ENCODE measurements at regions of chr9 and their contacts with region 1.

Region 1: GRCh38 chr9:35611230-35611797 is 6.3 kb downstream of the TESK1 start:
- DNase-seq: peak in 1 of 2 experiments; percentile 55
- H3K4me3 ChIP-seq: no peak overlapping the region
- H3K27ac ChIP-seq: no peak overlapping the region
- H3K4me1 ChIP-seq: peaks cover 0 to 5% (median 3%) of the 10 kb centered on the region in 4 experiments; a peak in 4 of 7 replicates
- H3K27me3 ChIP-seq: peaks cover 0 to 7% (median 5%) of the 10 kb centered on the region in 4 experiments; a peak in 4 of 7 replicates
- CTCF ChIP-seq: peak; percentile 63 to 87 (median 87)
- EP300 ChIP-seq: no peak
- POLR2A ChIP-seq: no peak
- RAD21 ChIP-seq: peak; percentile 41 to 58

Region 2: GRCh38 chr9:35628389-35628991 is 17.2 kb after region 1 on chr9:
- CTCF ChIA-PET with region 1: interaction called, 13 read pairs
- POLR2A ChIA-PET with region 1: interaction called, 3 read pairs
- DNase-seq: no peak
- H3K4me3 ChIP-seq: no peak overlapping the region
- H3K27ac ChIP-seq: no peak overlapping the region
- H3K4me1 ChIP-seq: no peaks in the 10 kb centered on the region
- H3K27me3 ChIP-seq: no peaks in the 10 kb centered on the region
- CTCF ChIP-seq: no peak
- EP300 ChIP-seq: no peak
- POLR2A ChIP-seq: no peak
- RAD21 ChIP-seq: no peak

Region 3: DNA sequence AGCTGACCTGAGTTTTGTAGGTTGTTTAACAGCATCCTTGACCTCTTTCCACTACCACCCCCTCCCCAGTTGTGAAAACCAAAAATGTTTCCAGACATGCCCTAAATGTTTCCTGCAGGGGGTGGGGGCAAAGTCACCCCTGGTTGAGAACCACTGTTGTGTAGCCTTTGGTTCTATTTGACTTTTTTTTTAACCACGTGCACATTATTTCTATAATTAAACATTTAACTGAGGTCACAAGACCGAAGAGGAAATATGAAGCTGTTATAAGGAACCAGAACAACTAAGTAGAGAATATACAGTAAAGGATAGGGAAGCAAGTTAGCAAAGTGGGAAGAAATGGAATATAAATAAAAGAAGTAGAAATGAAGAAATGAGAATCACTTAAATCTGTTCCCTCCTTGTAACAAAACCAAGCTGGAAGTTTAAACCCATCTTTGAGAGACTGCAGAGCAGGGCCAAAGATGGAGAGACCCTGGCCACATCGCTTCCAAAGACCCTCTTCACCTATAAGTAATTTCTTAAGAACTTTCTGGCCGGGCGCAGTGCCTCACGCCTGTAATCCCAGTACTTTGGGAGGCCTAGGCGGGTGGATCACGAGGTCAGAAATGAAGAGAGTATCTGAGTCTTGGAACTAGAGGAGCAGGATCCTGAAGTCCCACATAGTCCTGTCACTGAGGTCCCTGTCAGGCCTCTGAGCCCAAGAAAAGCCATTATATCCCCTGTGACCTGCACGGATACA is 25.0 kb after region 1 on chr9:
- CTCF ChIA-PET with region 1: interaction called, 10 read pairs
- POLR2A ChIA-PET with region 1: interaction called, 3 read pairs
- DNase-seq: no peak
- H3K4me3 ChIP-seq: no peak overlapping the region
- H3K27ac ChIP-seq: no peak overlapping the region
- H3K4me1 ChIP-seq: no peaks in the 10 kb centered on the region
- H3K27me3 ChIP-seq: no peaks in the 10 kb centered on the region
- CTCF ChIP-seq: no peak
- EP300 ChIP-seq: no peak
- POLR2A ChIP-seq: no peak
- RAD21 ChIP-seq: no peak

Region 4: DNA sequence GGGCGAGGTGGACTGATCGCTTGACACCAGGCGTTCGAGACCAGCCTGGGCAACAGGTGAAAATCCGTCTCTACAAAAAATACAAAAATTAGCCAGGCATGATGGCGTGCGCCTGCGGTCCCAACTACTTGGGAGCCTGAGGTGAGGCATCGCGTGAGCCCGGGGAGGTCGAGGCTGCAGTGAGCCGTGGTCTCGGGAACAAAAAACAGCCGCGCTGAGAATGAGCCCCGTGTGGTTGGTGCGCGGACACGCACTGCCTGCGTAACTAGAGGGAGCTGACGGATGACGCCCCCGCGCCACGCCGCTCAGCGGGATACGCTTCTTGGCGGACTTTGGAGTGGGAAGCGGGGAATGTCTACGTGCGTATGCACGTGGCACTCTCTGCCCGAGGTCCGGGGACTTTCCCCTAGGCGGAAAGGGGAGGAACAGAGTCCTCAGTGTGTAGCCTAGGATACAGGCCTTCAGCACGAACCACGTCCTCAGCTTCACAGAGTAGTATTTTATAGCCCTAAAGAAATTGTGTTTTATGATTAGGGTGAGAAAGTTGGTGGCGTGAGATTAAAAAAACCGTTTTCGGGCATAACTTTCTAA is 46.3 kb after region 1 on chr9 and contains the start of gene RMRP:
- CTCF ChIA-PET with region 1: interaction called, 15 read pairs
- POLR2A ChIA-PET with region 1: interaction called, 4 read pairs
- DNase-seq: peak; percentile 96 to 98
- H3K4me3 ChIP-seq: peak within 1 kb of the TSS; percentile 70 to 92 (median 86)
- H3K27ac ChIP-seq: peak within 1 kb of the TSS; percentile 99
- H3K4me1 ChIP-seq: peaks cover 0 to 2% (median 0%) of the 10 kb centered on the region in 4 experiments; a peak in 4 of 7 replicates
- H3K27me3 ChIP-seq: peaks cover 0 to 7% (median 0%) of the 10 kb centered on the region in 4 experiments; a peak in 1 of 7 replicates
- CTCF ChIP-seq: peak in 2 of 3 experiments; percentile 4 to 8; a peak in 1 of 4 replicates
- EP300 ChIP-seq: peak in 1 of 2 experiments; percentile 91; a peak in 1 of 3 replicates
- POLR2A ChIP-seq: peak in 1 of 2 experiments; percentile 32; a peak in 2 of 3 replicates
- RAD21 ChIP-seq: peak in 1 of 2 experiments; percentile 7; a peak in 2 of 4 replicates
- total RNA-seq, gene RMRP: 14,987 and 16,528 TPM in 2 replicates

Region 5: DNA sequence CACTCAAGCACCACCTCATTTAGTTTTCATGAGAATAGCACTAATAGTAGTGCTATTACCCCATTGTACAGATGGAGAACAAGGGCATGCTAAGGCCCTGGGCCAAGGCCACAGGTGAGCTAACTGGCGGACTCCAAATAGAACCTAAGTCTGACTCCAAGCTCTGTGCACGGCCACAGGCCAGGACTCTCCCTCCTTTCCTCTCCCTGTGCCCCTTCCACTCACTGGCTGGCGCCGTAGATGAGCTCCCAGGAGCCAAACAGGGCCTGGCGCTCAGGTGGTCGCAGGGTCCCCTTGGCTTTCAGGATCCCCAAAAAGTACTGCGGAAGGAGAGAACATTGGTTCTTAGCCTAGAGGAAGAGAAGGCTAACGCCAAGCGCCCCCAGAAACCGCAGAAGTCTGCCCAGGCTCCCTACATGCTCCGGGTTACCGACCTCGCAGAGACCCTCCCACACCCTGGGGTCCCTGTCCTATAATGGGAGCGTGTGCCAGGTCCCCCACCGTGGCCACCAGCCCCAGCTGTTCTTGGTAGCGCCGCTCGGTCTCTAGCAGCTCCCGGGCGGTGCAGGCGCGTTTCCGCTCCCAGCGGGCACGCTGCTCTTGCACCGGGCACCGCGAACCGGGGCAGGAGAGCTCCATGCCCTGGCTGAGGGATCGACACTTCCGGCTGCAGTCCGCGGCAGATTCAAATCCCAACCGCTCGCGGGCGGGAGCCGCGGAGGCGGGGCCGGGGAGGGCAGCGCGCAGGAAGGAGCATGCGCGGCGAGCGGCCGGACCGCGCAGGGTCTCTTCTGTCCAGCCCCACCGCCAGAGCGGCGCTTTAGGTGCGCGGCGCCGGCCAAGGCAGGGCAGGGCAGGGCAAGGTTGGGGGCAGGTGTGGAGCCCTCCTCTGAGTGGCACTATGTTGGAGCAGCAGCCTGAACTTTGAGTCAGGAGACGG is 53.5 kb after region 1 on chr9 and contains the start of gene ARHGEF39:
- CTCF ChIA-PET with region 1: interaction called, 15 read pairs
- POLR2A ChIA-PET with region 1: interaction called, 4 read pairs
- DNase-seq: peak; percentile 81 to 92
- H3K4me3 ChIP-seq: peak within 1 kb of the TSS; percentile 50 to 84 (median 78)
- H3K27ac ChIP-seq: 0 out of 2 replicates have a peak within 1 kb of the TSS, but pooled peaks have one; percentile 56
- H3K4me1 ChIP-seq: peaks cover 0 to 5% (median 1%) of the 10 kb centered on the region in 4 experiments; a peak in 5 of 7 replicates
- H3K27me3 ChIP-seq: no peaks in the 10 kb centered on the region
- CTCF ChIP-seq: peak; percentile 58 to 65 (median 60); a peak in 3 of 4 replicates
- EP300 ChIP-seq: no peak
- POLR2A ChIP-seq: peak in 1 of 2 experiments; percentile 75; a peak in 2 of 3 replicates
- RAD21 ChIP-seq: peak; percentile 41 to 44
- total RNA-seq, gene ARHGEF39: 17.5 and 18.6 TPM in 2 replicates